ENCODE measurements at regions of chr6 and their contacts with region 1.

Region 1: DNA sequence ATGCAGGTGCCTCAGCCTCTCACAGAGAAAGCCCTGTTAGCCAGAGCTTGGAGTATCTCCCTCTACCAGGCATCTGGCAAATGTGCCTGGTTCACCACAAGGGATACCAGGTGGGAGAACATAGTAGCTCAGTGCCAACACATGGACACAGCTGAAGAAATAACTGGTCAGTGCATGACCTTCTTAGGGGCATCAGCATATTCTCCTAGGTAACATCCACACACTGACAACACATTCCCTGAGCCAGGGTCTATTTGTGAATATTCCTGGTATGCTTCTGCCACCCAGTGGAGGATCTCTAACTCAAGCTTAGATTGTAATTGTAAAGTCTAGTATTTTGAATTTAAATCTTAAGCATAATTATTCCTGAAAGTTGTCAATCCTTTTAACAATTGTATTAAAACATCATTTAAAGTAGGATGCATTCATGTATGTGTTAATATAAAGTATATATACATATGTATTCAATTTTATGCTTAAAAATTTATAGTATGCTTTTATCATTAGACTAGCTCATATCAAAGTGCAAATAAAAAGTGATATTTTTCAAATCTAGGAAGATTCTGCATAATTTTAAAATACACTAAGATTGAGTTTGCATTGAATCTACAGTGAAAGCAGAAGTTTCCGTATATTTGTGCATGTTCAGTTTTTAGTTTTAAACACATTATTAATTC is 45.3 kb upstream of the COL21A1 start:
- DNase-seq: peak; percentile 71
- H3K4me3 Mint-ChIP-seq: no peak overlapping the region
- H3K27ac Mint-ChIP-seq: no peak overlapping the region
- H3K4me1 Mint-ChIP-seq: peaks cover 6% of the 10 kb centered on the region
- H3K27me3 Mint-ChIP-seq: no peaks in the 10 kb centered on the region
- CTCF ChIP-seq: peak; percentile 61

Region 2: DNA sequence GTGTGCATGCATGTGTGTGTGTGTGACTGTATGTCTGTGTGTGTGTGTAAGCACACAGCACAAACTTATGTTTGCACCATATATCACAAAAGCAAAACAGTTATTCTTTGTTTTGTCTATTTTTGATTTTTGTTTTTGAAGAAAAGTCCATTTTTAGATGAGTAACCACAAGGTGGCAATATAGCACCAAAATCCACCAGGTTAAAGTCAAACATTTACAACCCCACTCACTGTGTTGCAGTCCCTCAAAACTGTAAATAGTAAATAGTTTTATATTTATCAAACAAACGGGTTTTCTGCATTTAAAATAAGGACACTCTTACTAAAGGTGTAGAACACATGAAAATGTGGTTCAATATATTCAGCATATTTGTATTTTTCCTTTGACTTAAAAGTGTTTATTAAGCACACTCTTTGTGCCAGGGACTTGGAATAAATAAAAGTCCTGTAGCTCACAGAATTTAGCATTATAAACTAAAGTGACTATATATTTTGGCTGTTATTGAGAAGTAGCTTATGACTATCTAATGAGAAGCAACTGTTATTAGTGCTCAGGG is 846.9 kb before region 1 on chr6:
- CTCF ChIA-PET with region 1: interaction called, 4 read pairs
- POLR2A ChIA-PET with region 1: no interaction called
- intact Hi-C with region 1: loop called (anchors 1 kb)
- DNase-seq: peak; percentile 50
- H3K4me3 Mint-ChIP-seq: no peak overlapping the region
- H3K27ac Mint-ChIP-seq: no peak overlapping the region
- H3K4me1 Mint-ChIP-seq: peaks cover 9% of the 10 kb centered on the region
- H3K27me3 Mint-ChIP-seq: no peaks in the 10 kb centered on the region
- CTCF ChIP-seq: peak; percentile 68

Region 3: DNA sequence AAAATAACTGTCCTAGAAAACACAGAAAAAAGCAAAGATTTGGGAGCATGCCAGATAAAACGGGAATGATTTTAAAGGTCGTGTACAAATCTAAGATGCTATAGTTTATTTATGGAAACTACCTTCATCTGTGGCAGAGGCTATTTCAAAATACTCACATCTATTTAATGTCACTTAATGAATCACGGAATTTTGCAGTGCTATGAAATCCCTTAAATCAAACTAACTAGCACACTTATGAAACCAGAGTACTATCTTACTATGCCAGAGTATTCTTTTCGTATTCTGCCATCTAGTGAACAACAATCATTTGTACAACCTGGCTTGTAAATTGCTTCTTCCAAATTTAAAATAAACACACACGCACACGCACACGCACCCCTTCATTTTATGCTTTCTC is 339.3 kb before region 1 on chr6:
- CTCF ChIA-PET with region 1: interaction called, 16 read pairs
- POLR2A ChIA-PET with region 1: no interaction called
- intact Hi-C with region 1: no loop called
- DNase-seq: peak; percentile 61
- H3K4me3 Mint-ChIP-seq: peak overlapping the region; percentile 38
- H3K27ac Mint-ChIP-seq: no peak overlapping the region
- H3K4me1 Mint-ChIP-seq: no peaks in the 10 kb centered on the region
- H3K27me3 Mint-ChIP-seq: no peaks in the 10 kb centered on the region
- CTCF ChIP-seq: peak; percentile 47

Region 4: GRCh38 chr6:55992546-55992945 is 300.1 kb before region 1 on chr6:
- CTCF ChIA-PET with region 1: interaction called, 13 read pairs
- POLR2A ChIA-PET with region 1: interaction called, 3 read pairs
- intact Hi-C with region 1: no loop called
- DNase-seq: no peak
- H3K4me3 Mint-ChIP-seq: no peak overlapping the region
- H3K27ac Mint-ChIP-seq: no peak overlapping the region
- H3K4me1 Mint-ChIP-seq: no peaks in the 10 kb centered on the region
- H3K27me3 Mint-ChIP-seq: no peaks in the 10 kb centered on the region
- CTCF ChIP-seq: no peak

Region 5: GRCh38 chr6:56037601-56038000 is 255.0 kb before region 1 on chr6:
- CTCF ChIA-PET with region 1: interaction called, 20 read pairs
- POLR2A ChIA-PET with region 1: no interaction called
- intact Hi-C with region 1: loop called (anchors 2 kb)
- DNase-seq: no peak
- H3K4me3 Mint-ChIP-seq: no peak overlapping the region
- H3K27ac Mint-ChIP-seq: no peak overlapping the region
- H3K4me1 Mint-ChIP-seq: peaks cover 12% of the 10 kb centered on the region
- H3K27me3 Mint-ChIP-seq: no peaks in the 10 kb centered on the region
- CTCF ChIP-seq: no peak

Region 6: GRCh38 chr6:56279346-56280080 is 13.1 kb before region 1 on chr6:
- CTCF ChIA-PET with region 1: interaction called, 10 read pairs
- POLR2A ChIA-PET with region 1: no interaction called
- intact Hi-C with region 1: no loop called
- DNase-seq: no peak
- H3K4me3 Mint-ChIP-seq: no peak overlapping the region
- H3K27ac Mint-ChIP-seq: no peak overlapping the region
- H3K4me1 Mint-ChIP-seq: no peaks in the 10 kb centered on the region
- H3K27me3 Mint-ChIP-seq: no peaks in the 10 kb centered on the region
- CTCF ChIP-seq: no peak

Region 7: DNA sequence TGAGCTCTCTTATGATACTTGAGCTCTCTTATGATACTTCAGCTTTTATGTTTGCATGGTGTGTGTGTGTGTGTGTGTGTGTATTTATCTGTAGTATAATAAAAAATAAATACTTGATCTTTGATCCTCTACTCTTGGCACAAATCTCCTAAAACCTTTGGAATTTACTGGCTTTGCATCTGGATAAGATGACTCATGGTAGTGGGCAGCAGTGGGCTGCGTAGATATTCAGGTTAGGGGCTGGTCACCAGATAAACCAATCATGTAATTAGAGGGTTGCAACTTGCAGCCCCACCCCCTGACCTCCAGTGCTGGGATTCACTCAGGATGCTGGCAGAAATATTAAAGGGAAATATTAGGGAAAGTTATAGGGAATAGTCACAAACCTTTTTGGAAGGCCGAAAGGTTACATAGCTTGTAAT is 106.6 kb after region 1 on chr6:
- CTCF ChIA-PET with region 1: no interaction called
- POLR2A ChIA-PET with region 1: no interaction called
- intact Hi-C with region 1: no loop called
- DNase-seq: no peak
- H3K4me3 Mint-ChIP-seq: no peak overlapping the region
- H3K27ac Mint-ChIP-seq: no peak overlapping the region
- H3K4me1 Mint-ChIP-seq: no peaks in the 10 kb centered on the region
- H3K27me3 Mint-ChIP-seq: no peaks in the 10 kb centered on the region
- CTCF ChIP-seq: no peak